Activated T-helper 1 cell treated with anti-CD3 and anti-CD28 coated beads, Interleukin-12 subunit alpha, Interleukin-12 subunit beta, Interleukin-2, Interleukin-4 antibody, amounts not matched to agents 30 ng/mL and 10 ng/mL and 1 ng/mL, durations not matched to agents 14 hours and 24 hours and 36 hours (primary cell): ENCODE measurements at regions of chr19 and their contacts with region 1.

Region 1: GRCh38 chr19:28737021-28737895 is 475.7 kb downstream of the UQCRFS1 start:
- DNase-seq: no peak
- H3K4me3 Mint-ChIP-seq: no peak overlapping the region
- H3K27ac Mint-ChIP-seq: no peak overlapping the region
- H3K4me1 Mint-ChIP-seq: peaks cover 8% of the 10 kb centered on the region
- H3K27me3 Mint-ChIP-seq: peaks cover 5% of the 10 kb centered on the region

Region 2: GRCh38 chr19:28694819-28695218 is 42.4 kb before region 1 on chr19:
- intact Hi-C with region 1: no loop called
- DNase-seq: no peak
- H3K4me3 Mint-ChIP-seq: no peak overlapping the region
- H3K27ac Mint-ChIP-seq: no peak overlapping the region
- H3K4me1 Mint-ChIP-seq: no peaks in the 10 kb centered on the region
- H3K27me3 Mint-ChIP-seq: peaks cover 9% of the 10 kb centered on the region

Region 3: GRCh38 chr19:28878862-28879566 is 141.8 kb after region 1 on chr19:
- intact Hi-C with region 1: loop called (anchors 1 kb)
- DNase-seq: peak; percentile 38
- H3K4me3 Mint-ChIP-seq: no peak overlapping the region
- H3K27ac Mint-ChIP-seq: no peak overlapping the region
- H3K4me1 Mint-ChIP-seq: no peaks in the 10 kb centered on the region
- H3K27me3 Mint-ChIP-seq: peaks cover 7% of the 10 kb centered on the region

Region 4: GRCh38 chr19:29054886-29055675 is 317.8 kb after region 1 on chr19:
- intact Hi-C with region 1: no loop called
- DNase-seq: no peak
- H3K4me3 Mint-ChIP-seq: no peak overlapping the region
- H3K27ac Mint-ChIP-seq: no peak overlapping the region
- H3K4me1 Mint-ChIP-seq: no peaks in the 10 kb centered on the region
- H3K27me3 Mint-ChIP-seq: no peaks in the 10 kb centered on the region

Region 5: DNA sequence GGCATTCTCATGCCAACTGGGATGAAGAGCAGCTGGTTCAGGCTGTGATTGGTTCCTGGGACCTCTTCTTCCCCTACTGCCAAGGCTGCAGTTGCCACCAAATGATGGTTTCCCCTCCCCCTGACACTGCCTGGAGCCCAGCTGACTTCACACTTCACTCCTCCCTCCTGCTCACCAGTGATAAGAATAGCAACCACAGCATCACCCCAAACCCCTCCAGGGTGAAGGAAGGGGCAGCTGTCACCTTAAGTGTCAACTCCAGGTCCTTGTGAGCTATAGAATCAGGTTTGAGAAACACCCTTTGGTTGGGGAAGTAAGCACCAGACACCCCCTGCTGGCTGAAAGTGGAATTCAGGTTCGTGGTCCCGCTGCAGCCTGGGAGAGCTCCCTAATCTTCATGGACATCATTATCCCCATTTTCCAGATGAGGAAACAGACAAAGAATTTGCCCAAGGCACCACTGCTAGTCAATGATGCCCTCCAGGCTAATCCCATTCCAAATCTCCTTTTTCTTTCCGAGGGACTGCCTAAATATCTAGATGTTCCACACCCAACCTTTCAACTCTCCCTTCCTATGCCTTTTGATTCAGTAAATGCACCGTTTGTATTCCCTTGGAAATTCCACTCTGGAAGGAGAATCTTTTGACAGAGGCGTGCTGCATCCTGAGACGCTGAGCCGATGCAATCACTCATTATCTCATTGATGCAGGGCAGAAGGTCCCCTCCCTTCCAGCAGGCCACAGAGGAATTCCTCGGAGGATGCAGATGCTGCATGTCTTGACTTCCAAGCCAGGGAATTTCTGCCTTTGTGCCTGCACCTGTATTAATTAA is 526.3 kb after region 1 on chr19:
- intact Hi-C with region 1: loop called (anchors 1 kb)
- DNase-seq: peak; percentile 14
- H3K4me3 Mint-ChIP-seq: no peak overlapping the region
- H3K27ac Mint-ChIP-seq: no peak overlapping the region
- H3K4me1 Mint-ChIP-seq: peaks cover 4% of the 10 kb centered on the region
- H3K27me3 Mint-ChIP-seq: peaks cover 14% of the 10 kb centered on the region

Region 6: DNA sequence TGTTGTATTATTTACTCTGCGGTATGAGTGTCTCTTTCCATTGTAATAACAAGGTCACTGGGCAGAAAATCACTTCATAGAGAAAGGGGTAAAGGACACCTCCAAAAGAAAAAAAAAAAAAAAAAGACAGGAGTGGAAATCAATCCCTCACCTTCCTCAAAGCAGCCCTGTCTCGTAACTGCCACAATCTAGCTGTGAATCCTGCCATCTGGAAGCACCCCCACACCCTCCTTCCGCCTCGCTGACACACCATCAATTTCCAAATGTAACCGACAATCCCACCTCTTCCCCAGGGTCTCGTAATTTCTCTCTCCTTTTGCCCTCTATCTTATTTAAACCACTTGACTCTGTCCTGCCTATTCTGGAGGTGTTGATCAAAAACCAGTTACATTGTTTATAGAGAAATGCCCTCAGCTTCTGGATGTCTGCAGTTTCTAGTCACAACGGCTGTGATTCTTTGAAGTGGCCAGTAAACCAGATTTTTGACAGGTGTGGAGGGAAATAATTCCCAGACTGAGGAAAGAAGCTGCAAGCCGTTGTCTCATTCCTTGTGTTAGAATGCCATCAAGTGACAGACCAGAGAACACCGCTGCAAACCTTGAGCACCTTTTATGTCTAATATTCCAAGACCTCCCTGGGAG is 859.7 kb after region 1 on chr19:
- intact Hi-C with region 1: loop called (anchors 10 kb)
- DNase-seq: no peak
- H3K4me3 Mint-ChIP-seq: no peak overlapping the region
- H3K27ac Mint-ChIP-seq: no peak overlapping the region
- H3K4me1 Mint-ChIP-seq: no peaks in the 10 kb centered on the region
- H3K27me3 Mint-ChIP-seq: peaks cover 20% of the 10 kb centered on the region